CD8-positive, alpha-beta T cell (primary cell): ENCODE measurements at regions of chr11 and their contacts with region 1.

Region 1: DNA sequence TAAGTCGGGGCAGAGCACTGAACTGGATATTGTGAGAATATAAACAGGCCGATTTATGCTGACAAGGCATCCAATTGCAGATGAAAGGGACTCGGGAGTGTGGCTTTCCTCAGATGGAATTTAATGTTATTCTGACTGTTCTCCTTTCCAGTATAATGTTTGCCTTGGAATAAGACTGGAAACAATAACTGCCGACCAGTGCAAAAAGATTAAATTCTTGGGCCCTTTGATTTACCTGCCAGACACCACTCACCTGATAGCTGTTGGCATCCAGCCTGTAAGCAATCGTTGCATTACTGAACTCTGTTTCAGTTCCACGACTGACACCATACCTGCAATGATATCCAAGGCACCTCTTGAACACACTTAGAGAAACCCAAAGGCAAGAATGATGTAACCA is 10.9 kb downstream of the NUP160 start:
- DNase-seq: no peak
- ATAC-seq: no peak
- H3K4me3 ChIP-seq: no peak overlapping the region
- H3K4me3 Mint-ChIP-seq: no peak overlapping the region
- H3K27ac ChIP-seq: no peak overlapping the region
- H3K27ac Mint-ChIP-seq: no peak overlapping the region
- H3K4me1 ChIP-seq: no peaks in the 10 kb centered on the region
- H3K4me1 Mint-ChIP-seq: peaks cover 18% of the 10 kb centered on the region
- H3K27me3 ChIP-seq: no peaks in the 10 kb centered on the region
- H3K27me3 Mint-ChIP-seq: no peaks in the 10 kb centered on the region
- CTCF ChIP-seq: no peak

Region 2: DNA sequence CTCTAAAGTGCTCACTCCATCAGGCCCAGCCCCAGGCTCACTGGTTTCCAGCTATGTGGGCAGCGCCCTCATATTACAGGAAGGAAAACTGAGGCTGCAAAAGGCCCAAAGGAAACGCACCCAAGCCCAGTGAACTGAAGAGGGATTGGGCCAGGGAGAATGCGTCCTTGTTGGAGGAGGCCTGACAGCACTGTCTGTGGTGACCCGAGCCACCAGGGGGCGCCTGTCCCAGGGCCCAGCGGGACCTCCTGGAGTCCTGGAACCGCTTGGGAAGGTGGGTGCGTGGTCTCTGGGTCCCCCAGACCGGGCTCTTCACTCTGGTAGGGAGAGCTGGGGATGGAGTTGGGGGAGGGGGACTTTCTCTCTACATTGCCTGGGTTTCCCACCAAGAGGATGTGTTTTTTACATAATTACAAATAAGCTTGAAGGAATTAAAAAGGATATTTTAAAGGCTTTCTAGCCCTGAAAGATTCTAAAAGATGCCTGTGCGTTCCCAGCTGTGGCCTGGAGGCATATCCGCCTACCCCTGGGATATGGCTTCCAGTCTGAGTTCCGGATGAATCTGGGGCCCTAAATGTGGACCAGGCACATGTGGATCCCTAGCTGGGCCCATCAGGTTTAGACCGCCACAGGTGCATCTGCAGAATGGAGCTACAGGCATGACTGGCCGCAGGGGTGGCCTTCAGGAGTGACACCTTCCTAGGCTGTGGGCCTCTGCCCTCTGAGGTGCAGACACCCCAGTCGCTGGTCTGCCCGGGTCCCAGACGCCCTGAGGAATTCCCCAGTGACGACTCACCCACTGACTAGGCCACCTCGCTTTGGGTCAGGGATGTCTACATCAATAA is 463.2 kb before region 1 on chr11:
- CTCF ChIA-PET with region 1: no interaction called
- POLR2A ChIA-PET with region 1: no interaction called
- intact Hi-C with region 1: no loop called
- DNase-seq: peak; percentile 66 to 94 (median 86)
- ATAC-seq: peak; percentile 97
- H3K4me3 ChIP-seq: no peak overlapping the region
- H3K4me3 Mint-ChIP-seq: no peak overlapping the region
- H3K27ac ChIP-seq: no peak overlapping the region
- H3K27ac Mint-ChIP-seq: no peak overlapping the region
- H3K4me1 ChIP-seq: peaks cover 3% of the 10 kb centered on the region
- H3K4me1 Mint-ChIP-seq: peaks cover 9% of the 10 kb centered on the region
- H3K27me3 ChIP-seq: no peaks in the 10 kb centered on the region
- H3K27me3 Mint-ChIP-seq: no peaks in the 10 kb centered on the region
- CTCF ChIP-seq: peak; percentile 91

Region 3: GRCh38 chr11:47786373-47786772 is 50.9 kb before region 1 on chr11:
- CTCF ChIA-PET with region 1: no interaction called
- POLR2A ChIA-PET with region 1: no interaction called
- intact Hi-C with region 1: loop called in 1 of 2 experiments (anchors 5 kb)
- DNase-seq: no peak
- ATAC-seq: no peak
- H3K4me3 ChIP-seq: no peak overlapping the region
- H3K4me3 Mint-ChIP-seq: no peak overlapping the region
- H3K27ac ChIP-seq: no peak overlapping the region
- H3K27ac Mint-ChIP-seq: no peak overlapping the region
- H3K4me1 ChIP-seq: no peaks in the 10 kb centered on the region
- H3K4me1 Mint-ChIP-seq: no peaks in the 10 kb centered on the region
- H3K27me3 ChIP-seq: no peaks in the 10 kb centered on the region
- H3K27me3 Mint-ChIP-seq: no peaks in the 10 kb centered on the region
- CTCF ChIP-seq: no peak